Activated naive CD4-positive, alpha-beta T cell treated with anti-CD3 and anti-CD28 coated beads for 36 hours (primary cell): ENCODE measurements at regions of chr10 and their contacts with region 1.

Region 1: GRCh38 chr10:118729641-118730258 is 25.0 kb downstream of the CACUL1 start:
- DNase-seq: no peak
- H3K4me3 Mint-ChIP-seq: no peak overlapping the region
- H3K27ac Mint-ChIP-seq: no peak overlapping the region
- H3K4me1 Mint-ChIP-seq: peaks cover 53% of the 10 kb centered on the region
- H3K27me3 Mint-ChIP-seq: no peaks in the 10 kb centered on the region

Region 2: DNA sequence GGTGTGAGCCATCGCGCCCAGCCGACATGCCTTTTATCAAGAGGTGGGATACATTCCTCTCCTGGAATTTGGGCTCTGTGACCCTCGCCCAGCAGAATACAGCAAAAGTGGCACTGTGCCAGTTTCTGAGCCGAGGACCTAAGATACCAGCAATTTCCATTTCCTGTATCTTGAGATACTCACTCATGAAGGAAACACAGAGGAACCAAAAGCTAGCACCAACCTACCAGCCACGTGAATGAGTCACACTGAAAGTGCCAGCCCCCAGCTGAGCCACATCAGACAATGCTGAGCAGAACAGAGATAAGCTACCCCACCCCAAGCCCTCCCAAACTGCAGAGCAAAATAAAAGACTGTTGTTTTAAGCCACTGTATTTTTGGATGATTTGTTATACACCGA is 31.3 kb before region 1 on chr10:
- CTCF ChIA-PET with region 1: interaction called, 8 read pairs
- intact Hi-C with region 1: loop called (anchors 1 kb)
- DNase-seq: peak; percentile 90
- H3K4me3 Mint-ChIP-seq: no peak overlapping the region
- H3K27ac Mint-ChIP-seq: peak overlapping the region; percentile 32
- H3K4me1 Mint-ChIP-seq: peaks cover 49% of the 10 kb centered on the region
- H3K27me3 Mint-ChIP-seq: no peaks in the 10 kb centered on the region

Region 3: DNA sequence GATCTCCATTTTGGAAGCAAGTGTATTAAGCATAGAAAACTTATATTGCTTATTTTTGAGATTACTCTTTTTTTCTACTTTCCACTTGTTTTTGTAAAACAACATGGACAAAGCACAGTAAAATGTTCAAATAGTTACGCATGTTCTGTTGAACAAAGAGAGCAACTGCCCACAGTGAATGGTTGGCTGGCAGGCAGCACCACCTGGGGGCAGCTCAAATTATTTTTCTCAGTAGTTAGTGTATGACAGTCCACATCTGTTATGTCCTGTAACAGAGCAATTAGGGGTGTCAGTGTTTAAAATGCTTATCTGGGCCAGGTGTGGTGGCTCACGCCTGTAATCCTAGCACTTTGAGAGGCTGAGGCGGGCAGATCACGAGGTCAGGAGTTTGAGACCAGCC is 71.2 kb after region 1 on chr10:
- CTCF ChIA-PET with region 1: no interaction called
- intact Hi-C with region 1: loop called (anchors 2 kb)
- DNase-seq: peak; percentile 46
- H3K4me3 Mint-ChIP-seq: no peak overlapping the region
- H3K27ac Mint-ChIP-seq: no peak overlapping the region
- H3K4me1 Mint-ChIP-seq: peaks cover 3% of the 10 kb centered on the region
- H3K27me3 Mint-ChIP-seq: peaks cover 6% of the 10 kb centered on the region

Region 4: GRCh38 chr10:118812086-118812740 is 82.5 kb after region 1 on chr10:
- CTCF ChIA-PET with region 1: no interaction called
- intact Hi-C with region 1: no loop called
- DNase-seq: no peak
- H3K4me3 Mint-ChIP-seq: no peak overlapping the region
- H3K27ac Mint-ChIP-seq: no peak overlapping the region
- H3K4me1 Mint-ChIP-seq: no peaks in the 10 kb centered on the region
- H3K27me3 Mint-ChIP-seq: no peaks in the 10 kb centered on the region

Region 5: DNA sequence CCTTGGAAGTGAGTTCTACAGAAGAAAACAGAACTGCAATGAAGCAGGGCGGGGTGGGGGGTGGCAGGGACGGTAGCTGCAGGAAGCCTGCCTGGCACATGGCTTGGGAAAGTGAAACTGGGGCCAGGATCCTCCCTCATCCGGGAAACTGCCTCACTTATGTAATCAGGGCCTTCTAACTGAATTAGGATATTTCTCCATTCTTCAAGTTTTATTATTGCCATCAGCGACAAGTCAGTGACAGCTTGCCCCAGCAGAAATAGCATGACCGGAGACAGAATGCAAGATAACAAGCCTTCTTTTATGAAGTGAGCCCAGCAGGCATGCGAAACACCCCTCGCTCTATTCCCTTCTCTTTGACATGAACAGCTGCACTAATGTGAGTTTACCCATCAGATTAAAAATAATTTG is 102.5 kb after region 1 on chr10:
- CTCF ChIA-PET with region 1: no interaction called
- intact Hi-C with region 1: loop called (anchors 5 kb)
- DNase-seq: peak; percentile 22
- H3K4me3 Mint-ChIP-seq: no peak overlapping the region
- H3K27ac Mint-ChIP-seq: no peak overlapping the region
- H3K4me1 Mint-ChIP-seq: peaks cover 6% of the 10 kb centered on the region
- H3K27me3 Mint-ChIP-seq: no peaks in the 10 kb centered on the region